ENCODE measurements at regions of chr17 and their contacts with region 1.

Region 1: GRCh38 chr17:28726226-28727130 is at the start of gene TLCD1:
- DNase-seq: peak; percentile 91 to 97 (median 92)
- ATAC-seq: peak; percentile 70 to 78 (median 73)
- H3K4me3 ChIP-seq: peak within 1 kb of the TSS; percentile 49 to 90 (median 82)
- H3K27ac ChIP-seq: peak within 1 kb of the TSS in 11 of 12 donors; percentile 27 to 97 (median 66)
- H3K4me1 ChIP-seq: peaks cover 0 to 56% (median 33%) of the 10 kb centered on the region in 12 donors
- H3K27me3 ChIP-seq: peaks cover 0 to 4% (median 0%) of the 10 kb centered on the region in 9 donors
- CTCF ChIP-seq: peak in 11 of 12 donors; percentile 99 to 100 (median 99)
- POLR2A ChIP-seq: peak in 1 of 2 donors; percentile 3
- total RNA-seq, gene TLCD1: 0.52 to 4.8 (median 1.7) TPM

Region 2: GRCh38 chr17:28743225-28744103 is 17.0 kb after region 1 on chr17 and contains the start of gene TRAF4:
- intact Hi-C with region 1: loop called in 5 of 10 experiments (anchors 2 kb)
- DNase-seq: peak; percentile 79 to 89 (median 84)
- ATAC-seq: peak; percentile 83 to 91 (median 87)
- H3K4me3 ChIP-seq: peak within 1 kb of the TSS; percentile 56 to 89 (median 76)
- H3K27ac ChIP-seq: peak within 1 kb of the TSS; percentile 55 to 88 (median 86)
- H3K4me1 ChIP-seq: peaks cover 0 to 57% (median 32%) of the 10 kb centered on the region in 12 donors
- H3K27me3 ChIP-seq: no peaks in the 10 kb centered on the region
- CTCF ChIP-seq: peak in 6 of 12 donors; percentile 14 to 42 (median 34)
- POLR2A ChIP-seq: peak in 1 of 2 donors; percentile 67
- total RNA-seq, gene TRAF4: 1.5 to 11.5 (median 2.7) TPM

Region 3: DNA sequence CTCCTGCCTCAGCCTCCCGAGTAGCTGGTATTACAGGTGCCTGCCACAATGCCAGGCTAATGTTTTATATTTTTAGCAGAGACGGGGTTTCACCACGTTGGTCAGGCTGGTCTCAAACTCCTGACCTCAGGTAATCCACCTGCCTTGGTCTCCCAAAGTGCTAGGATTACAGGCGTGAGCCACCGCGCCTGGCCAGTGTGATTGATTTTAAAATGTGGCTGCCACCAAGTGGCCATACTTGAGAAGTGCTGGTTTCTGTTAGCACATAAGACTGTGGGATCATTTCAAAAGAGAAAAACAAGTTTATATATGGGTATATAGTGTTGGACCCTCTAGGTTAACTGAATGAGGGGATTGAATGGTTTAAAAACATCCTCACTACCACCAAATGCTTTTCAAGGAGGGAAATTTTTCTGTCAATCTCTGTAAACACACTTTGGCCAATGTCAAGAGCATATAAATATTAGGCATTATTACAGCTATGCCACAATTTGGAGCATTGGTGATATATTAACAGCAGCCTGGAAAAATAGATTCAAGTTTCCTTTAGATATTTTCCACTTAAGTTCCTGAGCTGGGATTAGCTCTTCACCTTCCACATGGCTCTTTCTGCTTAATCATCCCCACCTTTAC is 189.9 kb after region 1 on chr17:
- intact Hi-C with region 1: loop called in 5 of 10 experiments (anchors 5 to 10 kb)
- DNase-seq: peak in 1 of 5 donors; percentile 44
- ATAC-seq: peak; percentile 58 to 75 (median 66)
- H3K4me3 ChIP-seq: no peak overlapping the region
- H3K27ac ChIP-seq: no peak overlapping the region
- H3K4me1 ChIP-seq: peaks cover 0 to 10% (median 3%) of the 10 kb centered on the region in 12 donors
- H3K27me3 ChIP-seq: no peaks in the 10 kb centered on the region
- CTCF ChIP-seq: peak; percentile 56 to 76 (median 62)
- POLR2A ChIP-seq: no peak

Region 4: GRCh38 chr17:29111816-29112499 is 385.5 kb after region 1 on chr17:
- intact Hi-C with region 1: loop called in 2 of 10 experiments (anchors 5 to 10 kb)
- DNase-seq: peak; percentile 57 to 86 (median 68)
- ATAC-seq: peak; percentile 42 to 70 (median 60)
- H3K4me3 ChIP-seq: no peak overlapping the region
- H3K27ac ChIP-seq: peak overlapping the region in 10 of 12 donors; percentile 13 to 59 (median 48)
- H3K4me1 ChIP-seq: peaks cover 15 to 55% (median 37%) of the 10 kb centered on the region in 12 donors
- H3K27me3 ChIP-seq: no peaks in the 10 kb centered on the region
- CTCF ChIP-seq: peak; percentile 74 to 96 (median 89)
- POLR2A ChIP-seq: no peak

Region 5: DNA sequence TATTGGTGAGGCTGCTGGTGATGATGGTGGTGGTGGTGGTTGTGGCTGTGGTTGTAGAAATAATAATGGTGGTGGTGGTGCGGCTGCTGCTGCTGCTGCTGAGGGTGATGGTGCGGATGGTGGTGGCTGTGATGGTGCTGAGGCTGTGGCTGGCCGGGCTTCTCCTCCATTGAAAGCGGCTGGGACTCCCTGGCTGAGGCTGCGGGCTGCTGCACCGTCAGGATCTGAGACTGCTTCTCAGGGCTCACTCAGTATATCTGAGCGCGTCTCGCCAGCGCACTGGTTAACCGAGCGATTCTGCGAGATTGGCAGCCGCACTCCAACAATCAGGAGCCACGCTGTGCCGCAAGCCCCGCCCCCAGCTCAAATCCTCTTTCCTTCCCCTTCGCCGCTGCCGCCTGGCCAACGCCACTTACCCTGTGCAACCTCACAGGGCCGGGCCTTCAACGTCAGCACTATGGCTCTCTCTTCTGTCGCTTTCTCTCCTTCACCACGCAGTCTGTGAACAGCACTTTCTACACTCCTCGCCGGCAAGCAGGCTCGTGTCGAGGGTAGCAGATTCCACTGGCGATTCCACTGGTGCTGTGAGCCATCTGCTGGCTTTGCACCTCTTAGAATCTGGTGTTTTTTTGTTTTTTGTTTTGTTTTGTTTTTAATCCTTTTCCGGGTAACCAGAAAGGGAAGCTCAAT is 567.6 kb after region 1 on chr17 and contains the start of gene NUFIP2:
- intact Hi-C with region 1: loop called in 1 of 10 experiments (anchors 10 kb)
- DNase-seq: peak; percentile 99 to 100 (median 100)
- ATAC-seq: peak; percentile 94 to 98 (median 98)
- H3K4me3 ChIP-seq: peak within 1 kb of the TSS; percentile 61 to 99 (median 90)
- H3K27ac ChIP-seq: peak within 1 kb of the TSS; percentile 92 to 100 (median 96)
- H3K4me1 ChIP-seq: peaks cover 5 to 38% (median 29%) of the 10 kb centered on the region in 12 donors
- H3K27me3 ChIP-seq: no peaks in the 10 kb centered on the region
- CTCF ChIP-seq: peak in 2 of 12 donors; percentile 19 to 30
- POLR2A ChIP-seq: peak; percentile 100
- total RNA-seq, gene NUFIP2: 24.2 to 51.5 (median 35.7) TPM

Measured in heart left ventricle (tissue), 16 donors.